Right cardiac atrium (tissue), 5 donors: ENCODE measurements at regions of chr5 and their contacts with region 1.

Region 1: GRCh38 chr5:163347671-163348070 is 89.7 kb upstream of the CCNG1 start:
- DNase-seq: peak in 1 of 3 donors; percentile 22
- ATAC-seq: no peak
- H3K4me3 ChIP-seq: no peak overlapping the region
- H3K27ac ChIP-seq: no peak overlapping the region
- H3K4me1 ChIP-seq: no peaks in the 10 kb centered on the region
- H3K27me3 ChIP-seq: no peaks in the 10 kb centered on the region

Region 2: GRCh38 chr5:161544350-161544765 is 1803.3 kb before region 1 on chr5:
- intact Hi-C with region 1: loop called in 1 of 4 experiments (anchors 5 kb)
- DNase-seq: peak in 2 of 3 donors; percentile 46 to 59
- ATAC-seq: no peak
- H3K4me3 ChIP-seq: no peak overlapping the region
- H3K27ac ChIP-seq: no peak overlapping the region
- H3K4me1 ChIP-seq: peaks cover 1% of the 10 kb centered on the region
- H3K27me3 ChIP-seq: no peaks in the 10 kb centered on the region